K562 (cell line): ENCODE measurements at regions of chr15 and their contacts with region 1.

Region 1: GRCh38 chr15:77709135-77709886 is 76.6 kb upstream of the LINGO1 start:
- DNase-seq: peak in 3 of 4 experiments; percentile 21 to 38 (median 22)
- ATAC-seq: peak; percentile 69
- H3K4me3 ChIP-seq: no peak overlapping the region
- H3K27ac ChIP-seq: no peak overlapping the region
- H3K4me1 ChIP-seq: peaks cover 0 to 6% of the 10 kb centered on the region in 2 experiments; a peak in 1 of 5 replicates
- H3K27me3 ChIP-seq: peaks cover 9 to 51% of the 10 kb centered on the region in 2 experiments; a peak in 4 of 5 replicates
- CTCF ChIP-seq: peak in 2 of 3 experiments; percentile 21 to 38; a peak in 2 of 6 replicates
- EP300 ChIP-seq: no peak
- POLR2A ChIP-seq: no peak
- RAD21 ChIP-seq: no peak; a peak in 1 of 4 replicates

Region 2: DNA sequence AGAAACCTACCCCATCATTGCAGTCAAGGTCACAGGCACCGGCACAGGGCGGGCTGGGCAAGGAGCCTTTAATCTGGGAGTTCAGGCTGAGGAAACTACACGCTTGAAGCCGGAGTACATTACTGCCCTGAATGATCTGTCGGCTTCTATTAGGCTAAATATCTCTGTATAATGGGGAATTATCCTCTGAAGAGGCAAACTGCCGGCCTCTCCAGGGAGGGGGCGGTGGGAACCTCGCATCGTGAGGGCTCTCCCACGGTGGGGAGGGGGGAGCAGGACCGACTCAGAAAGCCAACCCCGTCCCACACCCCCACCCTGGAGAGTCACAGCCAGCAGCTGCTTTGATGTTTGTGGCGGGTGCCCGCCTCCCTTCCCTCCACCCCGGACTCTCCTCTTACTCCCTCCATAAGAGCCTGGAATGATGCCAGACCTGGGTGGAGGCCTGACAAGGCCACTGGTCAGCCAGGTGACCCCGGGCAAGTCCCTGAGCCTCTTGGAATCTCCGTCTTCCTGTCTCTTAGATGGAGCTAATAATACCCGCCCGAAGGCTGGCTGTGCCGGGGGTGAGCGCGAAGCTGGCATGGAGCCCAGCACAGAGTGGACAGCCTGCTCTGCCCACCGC is 13.2 kb before region 1 on chr15:
- CTCF ChIA-PET with region 1: no interaction called
- POLR2A ChIA-PET with region 1: no interaction called
- in situ Hi-C with region 1: no loop called
- intact Hi-C with region 1: no loop called
- DNase-seq: no peak
- ATAC-seq: no peak
- H3K4me3 ChIP-seq: no peak overlapping the region
- H3K27ac ChIP-seq: no peak overlapping the region
- H3K4me1 ChIP-seq: peaks cover 0 to 13% of the 10 kb centered on the region in 2 experiments; a peak in 1 of 5 replicates
- H3K27me3 ChIP-seq: peaks cover 22 to 49% of the 10 kb centered on the region in 2 experiments; a peak in 4 of 5 replicates
- CTCF ChIP-seq: no peak
- EP300 ChIP-seq: no peak
- POLR2A ChIP-seq: no peak
- RAD21 ChIP-seq: no peak

Region 3: DNA sequence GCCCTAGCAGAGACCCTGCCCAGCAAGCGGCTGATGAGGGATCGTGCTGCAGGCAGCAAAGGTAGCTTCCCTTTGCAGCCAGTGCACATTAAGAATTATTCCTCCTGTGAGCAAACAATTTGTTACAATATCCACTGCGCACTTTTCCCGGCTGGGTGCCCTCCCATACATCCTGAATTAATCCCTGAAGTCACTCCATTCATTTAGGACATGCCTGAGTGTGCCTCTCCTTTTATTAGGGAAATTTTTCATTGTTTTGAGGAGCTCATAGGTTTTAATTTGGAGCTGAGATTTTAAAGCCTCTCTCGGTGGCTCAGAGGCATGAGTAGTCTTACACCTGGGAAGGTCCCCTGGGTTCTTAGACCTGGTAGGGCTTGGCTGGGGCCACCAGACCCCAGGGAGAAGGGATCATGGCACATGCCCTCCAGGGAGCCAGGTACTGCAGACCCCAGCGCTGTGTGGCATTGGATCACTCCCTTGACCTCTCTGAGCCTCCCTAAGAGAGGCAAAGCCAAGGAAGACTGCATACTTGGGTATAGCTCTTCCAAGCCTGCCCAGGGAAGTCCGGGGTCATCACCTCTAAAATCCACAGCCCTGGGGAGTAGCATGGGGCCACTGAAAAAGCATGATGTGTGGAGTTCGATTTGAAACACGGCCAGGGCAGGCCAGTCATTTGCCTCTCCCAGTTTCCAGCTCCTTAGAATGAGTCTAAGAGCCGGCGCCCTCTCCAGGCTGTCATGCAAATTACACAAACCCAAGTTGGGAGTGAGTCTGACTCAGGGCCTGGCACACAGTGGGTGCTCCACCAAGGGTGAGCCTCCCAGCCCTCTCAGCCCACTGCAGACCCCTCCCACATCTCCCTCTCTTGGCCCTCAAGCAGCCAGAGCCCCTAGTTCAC is 75.3 kb after region 1 on chr15:
- CTCF ChIA-PET with region 1: no interaction called
- POLR2A ChIA-PET with region 1: interaction called, 4 read pairs
- in situ Hi-C with region 1: no loop called
- intact Hi-C with region 1: loop called (anchors 2 kb)
- DNase-seq: peak; percentile 70 to 75 (median 72)
- ATAC-seq: peak; percentile 88
- H3K4me3 ChIP-seq: no peak overlapping the region
- H3K27ac ChIP-seq: no peak overlapping the region
- H3K4me1 ChIP-seq: peaks cover 0 to 16% of the 10 kb centered on the region in 2 experiments; a peak in 2 of 5 replicates
- H3K27me3 ChIP-seq: peaks cover 4 to 40% of the 10 kb centered on the region in 2 experiments
- CTCF ChIP-seq: peak; percentile 78 to 80 (median 80)
- EP300 ChIP-seq: no peak
- POLR2A ChIP-seq: no peak
- RAD21 ChIP-seq: peak in 1 of 2 experiments; percentile 71; a peak in 2 of 4 replicates

Region 4: GRCh38 chr15:78396976-78397375 is 687.7 kb after region 1 on chr15:
- CTCF ChIA-PET with region 1: no interaction called
- POLR2A ChIA-PET with region 1: no interaction called
- in situ Hi-C with region 1: no loop called
- intact Hi-C with region 1: no loop called
- DNase-seq: peak; percentile 41 to 67 (median 56)
- ATAC-seq: peak; percentile 92
- H3K4me3 ChIP-seq: no peak overlapping the region
- H3K27ac ChIP-seq: no peak overlapping the region
- H3K4me1 ChIP-seq: no peaks in the 10 kb centered on the region; a peak in 1 of 5 replicates
- H3K27me3 ChIP-seq: peaks cover 24 to 60% of the 10 kb centered on the region in 2 experiments
- CTCF ChIP-seq: peak; percentile 59 to 67 (median 66)
- EP300 ChIP-seq: no peak
- POLR2A ChIP-seq: no peak
- RAD21 ChIP-seq: no peak; a peak in 1 of 4 replicates